ENCODE measurements at regions of chr9 and their contacts with region 1.

Region 1: DNA sequence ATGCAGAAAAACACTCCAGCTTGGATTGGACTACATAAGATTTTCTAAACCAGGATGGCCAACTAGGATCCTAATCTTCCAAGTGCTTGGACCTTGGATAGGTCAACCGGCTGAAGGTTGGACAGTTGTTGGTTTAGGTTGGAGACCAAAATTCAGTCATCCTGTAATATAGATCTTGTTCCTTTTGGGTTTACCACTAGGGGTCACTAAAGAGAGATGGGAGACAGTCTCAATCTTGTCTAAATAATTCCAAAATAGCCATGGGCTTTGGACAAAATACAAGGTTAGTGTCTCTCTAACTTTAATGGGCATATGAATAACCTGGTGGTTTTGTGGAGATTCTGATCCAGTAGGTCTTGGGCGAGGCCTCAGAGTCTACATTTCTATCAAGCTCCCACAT is 148.7 kb upstream of the ERCC6L2 start:
- DNase-seq: peak; percentile 68
- H3K4me3 ChIP-seq: no peak overlapping the region
- H3K27ac ChIP-seq: no peak overlapping the region
- H3K4me1 ChIP-seq: no peaks in the 10 kb centered on the region
- H3K27me3 ChIP-seq: no peaks in the 10 kb centered on the region
- CTCF ChIP-seq: peak; percentile 81

Region 2: DNA sequence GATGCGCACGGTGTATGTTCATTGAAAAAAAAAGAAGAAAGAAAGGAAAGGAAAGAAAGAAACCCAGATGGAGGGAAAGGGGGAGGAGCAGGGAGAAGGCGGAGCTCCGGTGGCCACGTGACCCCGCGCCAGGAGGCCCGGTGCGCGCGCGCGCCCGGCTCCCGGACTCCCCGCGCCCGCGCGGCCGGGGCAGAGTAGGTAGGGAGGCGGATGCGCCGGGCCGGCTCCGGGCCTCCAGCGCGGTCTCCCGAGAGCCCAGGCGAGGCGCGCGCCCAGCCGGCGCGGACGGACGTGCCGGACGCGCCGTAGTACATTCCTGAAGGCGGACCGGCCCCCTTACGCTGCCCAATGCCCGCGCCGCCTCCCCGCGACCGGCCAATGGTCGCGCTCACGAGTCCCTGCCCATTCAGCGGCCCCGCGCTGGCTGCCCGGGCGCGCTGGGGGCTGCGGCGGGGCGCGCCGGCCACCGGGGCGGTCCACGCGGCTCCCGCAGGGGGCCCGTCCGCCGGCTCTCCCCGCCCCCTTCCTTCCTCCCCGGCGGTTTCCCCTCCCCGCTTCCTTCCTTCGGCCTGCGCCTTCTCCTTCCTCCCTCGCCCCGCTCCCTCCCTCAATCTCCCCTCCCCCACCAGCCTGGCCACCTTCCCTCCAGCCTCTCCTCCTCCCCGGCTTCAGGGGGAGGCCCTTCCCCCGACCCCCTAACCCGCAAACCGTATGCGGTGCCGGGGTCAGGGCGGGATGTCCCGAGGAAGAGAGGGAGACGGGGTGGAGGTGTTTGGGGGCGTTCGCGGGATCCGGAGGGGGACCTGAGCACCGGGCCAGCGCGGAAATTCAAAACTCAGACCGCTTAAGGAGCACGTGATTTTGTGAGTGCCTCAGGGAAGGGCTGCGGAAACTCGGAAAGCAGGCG is 215.8 kb before region 1 on chr9:
- CTCF ChIA-PET with region 1: no interaction called
- POLR2A ChIA-PET with region 1: no interaction called
- intact Hi-C with region 1: no loop called
- DNase-seq: peak; percentile 97
- H3K4me3 ChIP-seq: peak overlapping the region; percentile 84
- H3K27ac ChIP-seq: peak overlapping the region; percentile 91
- H3K4me1 ChIP-seq: peaks cover 44% of the 10 kb centered on the region
- H3K27me3 ChIP-seq: no peaks in the 10 kb centered on the region
- CTCF ChIP-seq: no peak

Region 3: GRCh38 chr9:95875305-95876137 is 148.8 kb after region 1 on chr9 and contains the start of gene ERCC6L2:
- CTCF ChIA-PET with region 1: no interaction called
- POLR2A ChIA-PET with region 1: no interaction called
- intact Hi-C with region 1: loop called (anchors 10 kb)
- DNase-seq: peak; percentile 99
- H3K4me3 ChIP-seq: no peak within 1 kb of the TSS
- H3K27ac ChIP-seq: no peak within 1 kb of the TSS
- H3K4me1 ChIP-seq: peaks cover 8% of the 10 kb centered on the region
- H3K27me3 ChIP-seq: no peaks in the 10 kb centered on the region
- CTCF ChIP-seq: no peak
- total RNA-seq, gene ERCC6L2: 43.5 and 51.2 TPM in 2 replicates

Region 4: GRCh38 chr9:96061293-96061987 is 334.7 kb after region 1 on chr9:
- CTCF ChIA-PET with region 1: no interaction called
- POLR2A ChIA-PET with region 1: no interaction called
- intact Hi-C with region 1: loop called (anchors 2 kb)
- DNase-seq: peak; percentile 75
- H3K4me3 ChIP-seq: no peak overlapping the region
- H3K27ac ChIP-seq: no peak overlapping the region
- H3K4me1 ChIP-seq: no peaks in the 10 kb centered on the region
- H3K27me3 ChIP-seq: no peaks in the 10 kb centered on the region
- CTCF ChIP-seq: peak; percentile 70

Measured in A673 (cell line).